Activated T-helper 2 cell treated with anti-CD3 and anti-CD28 coated beads, Interferon-gamma antibody, Interleukin-2, Interleukin-4, amounts not matched to agents 10 μg/mL and 5 μg/mL and 100 μg/mL, durations not matched to agents 14 hours and 24 hours and 36 hours (primary cell): ENCODE measurements at regions of chr12 and their contacts with region 1.

Region 1: GRCh38 chr12:102061560-102062418 is at the start of gene WASHC3:
- DNase-seq: peak; percentile 95
- H3K4me3 Mint-ChIP-seq: peak within 1 kb of the TSS; percentile 92
- H3K27ac Mint-ChIP-seq: peak within 1 kb of the TSS; percentile 99
- H3K4me1 Mint-ChIP-seq: peaks cover 38% of the 10 kb centered on the region
- H3K27me3 Mint-ChIP-seq: no peaks in the 10 kb centered on the region
- total RNA-seq, gene WASHC3: 34.0 and 39.0 TPM in 2 replicates

Region 2: GRCh38 chr12:100266835-100267618 is 1794.8 kb before region 1 on chr12 and contains the starts of genes DEPDC4 and SCYL2:
- intact Hi-C with region 1: loop called (anchors 10 kb)
- DNase-seq: peak; percentile 89
- H3K4me3 Mint-ChIP-seq: peak within 1 kb of the TSS; percentile 95
- H3K27ac Mint-ChIP-seq: peak within 1 kb of the TSS; percentile 98
- H3K4me1 Mint-ChIP-seq: peaks cover 27% of the 10 kb centered on the region
- H3K27me3 Mint-ChIP-seq: no peaks in the 10 kb centered on the region
- total RNA-seq, gene DEPDC4: 1.7 and 1.8 TPM in 2 replicates
- total RNA-seq, gene SCYL2: 31.8 and 34.5 TPM in 2 replicates

Region 3: GRCh38 chr12:101697197-101697929 is 364.4 kb before region 1 on chr12 and contains the start of gene CHPT1:
- intact Hi-C with region 1: loop called (anchors 10 kb)
- DNase-seq: peak; percentile 46
- H3K4me3 Mint-ChIP-seq: peak within 1 kb of the TSS; percentile 87
- H3K27ac Mint-ChIP-seq: peak within 1 kb of the TSS; percentile 73
- H3K4me1 Mint-ChIP-seq: peaks cover 19% of the 10 kb centered on the region
- H3K27me3 Mint-ChIP-seq: peaks cover 6% of the 10 kb centered on the region
- total RNA-seq, gene CHPT1: 17.6 and 18.3 TPM in 2 replicates

Region 4: GRCh38 chr12:101919447-101919846 is 142.3 kb before region 1 on chr12:
- intact Hi-C with region 1: loop called (anchors 5 kb)
- DNase-seq: no peak
- H3K4me3 Mint-ChIP-seq: no peak overlapping the region
- H3K27ac Mint-ChIP-seq: no peak overlapping the region
- H3K4me1 Mint-ChIP-seq: peaks cover 5% of the 10 kb centered on the region
- H3K27me3 Mint-ChIP-seq: no peaks in the 10 kb centered on the region

Region 5: DNA sequence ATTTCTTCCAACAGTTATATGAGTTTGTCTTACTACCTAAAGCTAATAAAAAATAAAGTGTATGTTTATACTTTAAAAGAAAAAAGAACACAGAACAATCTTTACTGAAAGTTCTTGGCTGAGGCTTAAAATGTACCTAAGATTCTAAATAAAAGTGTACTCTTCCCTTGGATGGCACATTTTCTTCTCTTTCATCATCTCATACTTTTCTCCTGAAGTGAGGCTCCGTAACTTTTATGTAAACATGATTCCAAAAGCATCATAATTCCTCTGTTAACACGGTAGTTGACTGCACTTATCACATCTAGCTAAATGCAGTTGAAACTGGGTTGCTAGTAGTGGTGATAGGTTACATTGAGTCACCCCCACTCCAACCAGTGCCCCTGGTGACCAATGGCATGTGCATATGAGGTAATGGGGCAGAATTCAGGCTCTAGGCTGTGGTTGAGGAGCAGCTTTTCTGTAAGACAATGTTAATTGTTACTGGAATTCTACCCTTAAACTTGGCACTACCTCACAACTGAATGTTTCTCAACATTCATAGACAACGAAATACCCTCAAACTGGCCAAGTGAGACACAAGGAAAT is 38.4 kb before region 1 on chr12:
- intact Hi-C with region 1: no loop called
- DNase-seq: no peak
- H3K4me3 Mint-ChIP-seq: no peak overlapping the region
- H3K27ac Mint-ChIP-seq: no peak overlapping the region
- H3K4me1 Mint-ChIP-seq: peaks cover 2% of the 10 kb centered on the region
- H3K27me3 Mint-ChIP-seq: no peaks in the 10 kb centered on the region

Region 6: DNA sequence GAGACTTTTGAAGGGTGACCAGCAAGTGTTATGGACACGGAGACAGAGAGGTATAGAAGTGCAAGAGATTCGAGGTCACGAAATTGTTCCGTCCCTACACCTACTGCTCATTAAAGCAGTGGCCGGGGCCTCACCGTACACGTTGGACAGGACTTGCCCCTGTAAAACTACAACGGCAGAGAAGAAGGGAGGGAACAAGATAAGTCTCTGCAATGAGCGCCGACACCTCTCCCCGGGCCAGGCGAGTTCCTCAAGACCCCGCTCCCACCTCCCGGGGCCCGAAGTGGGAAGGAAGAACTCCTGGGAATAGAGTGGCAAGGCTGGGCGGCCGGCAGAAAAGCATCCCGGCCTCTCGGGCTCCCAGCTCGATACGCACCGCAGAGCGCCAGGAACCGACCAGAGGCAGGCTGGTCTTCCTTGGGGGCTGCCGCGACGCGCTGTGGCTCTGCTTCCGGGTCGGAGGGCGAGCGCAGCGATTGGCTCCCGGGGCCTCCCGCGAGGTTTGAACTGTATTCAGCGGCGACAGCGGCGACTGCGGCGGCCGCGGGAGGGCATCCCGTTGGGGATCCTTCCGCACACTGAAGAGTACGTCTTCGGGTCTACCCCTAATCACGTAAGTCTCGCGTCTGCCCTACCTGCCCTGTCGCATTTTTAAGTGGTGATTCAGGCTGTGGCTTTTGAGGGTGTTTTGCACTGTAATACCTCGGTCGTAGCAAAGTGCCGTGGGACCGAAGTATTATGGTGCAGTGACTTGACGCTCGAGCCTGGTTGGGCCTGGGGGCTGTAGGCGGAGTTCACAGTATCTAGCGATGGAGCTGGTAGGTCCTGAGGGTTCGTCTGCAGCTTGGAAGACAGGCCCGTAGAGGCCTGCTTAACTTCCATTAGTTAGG is 58.1 kb after region 1 on chr12 and contains the starts of genes NUP37 and PARPBP:
- intact Hi-C with region 1: loop called (anchors 1 kb)
- DNase-seq: peak; percentile 91
- H3K4me3 Mint-ChIP-seq: peak within 1 kb of the TSS; percentile 89
- H3K27ac Mint-ChIP-seq: peak within 1 kb of the TSS; percentile 77
- H3K4me1 Mint-ChIP-seq: peaks cover 36% of the 10 kb centered on the region
- H3K27me3 Mint-ChIP-seq: no peaks in the 10 kb centered on the region
- total RNA-seq, gene NUP37: 93.1 and 93.9 TPM in 2 replicates
- total RNA-seq, gene PARPBP: 27.0 and 27.4 TPM in 2 replicates

Region 7: GRCh38 chr12:102197789-102198188 is 136.0 kb after region 1 on chr12 and contains the start of gene PMCH:
- intact Hi-C with region 1: loop called (anchors 5 kb)
- DNase-seq: no peak
- H3K4me3 Mint-ChIP-seq: peak within 1 kb of the TSS; percentile 63
- H3K27ac Mint-ChIP-seq: peak within 1 kb of the TSS; percentile 73
- H3K4me1 Mint-ChIP-seq: peaks cover 38% of the 10 kb centered on the region
- H3K27me3 Mint-ChIP-seq: no peaks in the 10 kb centered on the region
- total RNA-seq, gene PMCH: 210 and 221 TPM in 2 replicates

Region 8: GRCh38 chr12:102728506-102729242 is 666.9 kb after region 1 on chr12:
- intact Hi-C with region 1: loop called (anchors 1 kb)
- DNase-seq: no peak
- H3K4me3 Mint-ChIP-seq: no peak overlapping the region
- H3K27ac Mint-ChIP-seq: peak overlapping the region; percentile 36
- H3K4me1 Mint-ChIP-seq: peaks cover 14% of the 10 kb centered on the region
- H3K27me3 Mint-ChIP-seq: peaks cover 4% of the 10 kb centered on the region